ENCODE measurements at regions of chr12 and their contacts with region 1.

Region 1: DNA sequence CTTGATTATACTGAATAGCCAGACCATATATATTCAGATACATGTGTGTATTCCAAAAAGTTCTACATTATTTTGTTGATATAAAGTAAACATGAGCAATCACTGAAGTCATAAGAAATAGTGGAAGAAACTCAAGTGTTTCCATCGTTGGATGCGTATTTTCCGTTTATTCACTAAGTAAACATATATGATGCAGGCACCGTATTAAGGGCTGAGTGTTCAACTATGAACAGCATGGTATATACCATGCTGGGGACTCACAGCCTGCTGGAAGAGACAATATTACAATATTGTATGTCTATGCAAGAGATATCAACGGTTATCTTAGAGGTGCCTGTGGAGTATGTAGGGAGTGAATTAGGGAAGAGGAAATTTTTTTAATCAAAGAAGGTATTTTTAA is 1.2 kb downstream of the PYROXD1 start:
- DNase-seq: no peak
- H3K4me3 ChIP-seq: peak overlapping the region in 2 of 3 experiments; percentile 99
- H3K4me3 Mint-ChIP-seq: peak overlapping the region; percentile 94 to 99
- H3K27ac ChIP-seq: peak overlapping the region in 1 of 2 donors; percentile 97
- H3K27ac Mint-ChIP-seq: peak overlapping the region in 1 of 7 donors; percentile 96
- H3K4me1 ChIP-seq: peaks cover 20 to 24% of the 10 kb centered on the region in 2 donors
- H3K4me1 Mint-ChIP-seq: peaks cover 36% of the 10 kb centered on the region
- H3K27me3 ChIP-seq: peaks cover 15 to 22% of the 10 kb centered on the region in 2 donors
- H3K27me3 Mint-ChIP-seq: peaks cover 3 to 14% (median 13%) of the 10 kb centered on the region in 3 donors
- CTCF ChIP-seq: no peak

Region 2: GRCh38 chr12:21354641-21355040 is 84.0 kb before region 1 on chr12:
- intact Hi-C with region 1: no loop called
- DNase-seq: no peak
- H3K4me3 ChIP-seq: no peak overlapping the region
- H3K4me3 Mint-ChIP-seq: no peak overlapping the region
- H3K27ac ChIP-seq: no peak overlapping the region
- H3K27ac Mint-ChIP-seq: no peak overlapping the region
- H3K4me1 ChIP-seq: no peaks in the 10 kb centered on the region
- H3K4me1 Mint-ChIP-seq: no peaks in the 10 kb centered on the region
- H3K27me3 ChIP-seq: no peaks in the 10 kb centered on the region
- H3K27me3 Mint-ChIP-seq: peaks cover 0 to 2% (median 2%) of the 10 kb centered on the region in 3 donors
- CTCF ChIP-seq: no peak

Region 3: DNA sequence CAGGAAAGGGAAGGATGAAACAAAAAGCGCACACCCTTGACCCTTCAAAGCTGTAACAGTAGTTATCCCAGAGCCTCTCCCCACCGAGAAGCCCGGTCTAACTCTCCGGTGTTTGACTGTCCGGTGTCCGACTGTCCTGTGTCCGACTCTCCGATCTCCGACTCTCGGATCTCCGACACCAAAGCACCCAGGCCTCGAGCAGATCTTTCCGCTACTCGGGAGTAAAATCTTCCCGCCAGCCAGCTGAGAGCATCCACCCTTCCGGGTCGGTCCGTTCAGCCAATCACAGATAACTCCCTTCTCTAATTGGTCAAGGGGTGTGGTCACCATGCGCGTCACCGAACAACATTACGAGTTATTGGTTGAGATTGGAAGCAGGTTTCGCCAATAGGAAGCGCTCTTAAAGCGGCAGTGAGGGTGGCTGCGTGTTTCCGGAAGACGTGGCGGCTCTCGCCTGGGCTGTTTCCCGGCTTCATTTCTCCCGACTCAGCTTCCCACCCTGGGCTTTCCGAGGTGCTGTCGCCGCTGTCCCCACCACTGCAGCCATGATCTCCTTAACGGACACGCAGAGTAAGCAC is 62.8 kb after region 1 on chr12 and contains the starts of genes GOLT1B and RECQL:
- intact Hi-C with region 1: loop called in 1 of 2 experiments (anchors 10 kb)
- DNase-seq: peak; percentile 96 to 97 (median 97)
- H3K4me3 ChIP-seq: peak within 1 kb of the TSS; percentile 76 to 86 (median 83)
- H3K4me3 Mint-ChIP-seq: no peak within 1 kb of the TSS
- H3K27ac ChIP-seq: peak within 1 kb of the TSS; percentile 85 to 94
- H3K27ac Mint-ChIP-seq: peak within 1 kb of the TSS in 1 of 7 donors; percentile 40
- H3K4me1 ChIP-seq: peaks cover 29 to 38% of the 10 kb centered on the region in 2 donors
- H3K4me1 Mint-ChIP-seq: peaks cover 26% of the 10 kb centered on the region
- H3K27me3 ChIP-seq: no peaks in the 10 kb centered on the region
- H3K27me3 Mint-ChIP-seq: no peaks in the 10 kb centered on the region
- CTCF ChIP-seq: no peak
- polyA plus RNA-seq, gene GOLT1B: 14.0 to 24.5 (median 21.4) TPM
- polyA plus RNA-seq, gene RECQL: 16.0 to 21.7 (median 18.6) TPM

Measured in CD14-positive monocyte (primary cell).